CD8-positive, alpha-beta T cell (primary cell): ENCODE measurements at regions of chr2 and their contacts with region 1.

Region 1: GRCh38 chr2:203586696-203587095 is 51.6 kb upstream of the RAPH1 start:
- DNase-seq: no peak
- ATAC-seq: no peak
- H3K4me3 ChIP-seq: no peak overlapping the region
- H3K4me3 Mint-ChIP-seq: no peak overlapping the region
- H3K27ac ChIP-seq: no peak overlapping the region
- H3K27ac Mint-ChIP-seq: no peak overlapping the region
- H3K4me1 ChIP-seq: no peaks in the 10 kb centered on the region
- H3K4me1 Mint-ChIP-seq: peaks cover 5% of the 10 kb centered on the region
- H3K27me3 ChIP-seq: peaks cover 0 to 2% of the 10 kb centered on the region in 2 experiments
- H3K27me3 Mint-ChIP-seq: no peaks in the 10 kb centered on the region
- CTCF ChIP-seq: no peak

Region 2: GRCh38 chr2:203551778-203552177 is 34.9 kb before region 1 on chr2:
- CTCF ChIA-PET with region 1: no interaction called
- POLR2A ChIA-PET with region 1: no interaction called
- intact Hi-C with region 1: loop called in 1 of 2 experiments (anchors 2 kb)
- DNase-seq: no peak
- ATAC-seq: no peak
- H3K4me3 ChIP-seq: no peak overlapping the region
- H3K4me3 Mint-ChIP-seq: no peak overlapping the region
- H3K27ac ChIP-seq: no peak overlapping the region
- H3K27ac Mint-ChIP-seq: no peak overlapping the region
- H3K4me1 ChIP-seq: peaks cover 4% of the 10 kb centered on the region
- H3K4me1 Mint-ChIP-seq: peaks cover 11% of the 10 kb centered on the region
- H3K27me3 ChIP-seq: no peaks in the 10 kb centered on the region
- H3K27me3 Mint-ChIP-seq: peaks cover 2% of the 10 kb centered on the region
- CTCF ChIP-seq: no peak

Region 3: GRCh38 chr2:203706403-203706802 is 119.7 kb after region 1 on chr2 and contains the start of gene CD28:
- CTCF ChIA-PET with region 1: no interaction called
- POLR2A ChIA-PET with region 1: no interaction called
- intact Hi-C with region 1: no loop called
- DNase-seq: peak; percentile 79 to 97 (median 89)
- ATAC-seq: peak; percentile 81
- H3K4me3 ChIP-seq: peak within 1 kb of the TSS; percentile 63 to 64
- H3K4me3 Mint-ChIP-seq: peak within 1 kb of the TSS; percentile 93
- H3K27ac ChIP-seq: peak within 1 kb of the TSS; percentile 82 to 83
- H3K27ac Mint-ChIP-seq: peak within 1 kb of the TSS; percentile 97
- H3K4me1 ChIP-seq: peaks cover 45% of the 10 kb centered on the region
- H3K4me1 Mint-ChIP-seq: peaks cover 53% of the 10 kb centered on the region
- H3K27me3 ChIP-seq: peaks cover 0 to 2% of the 10 kb centered on the region in 2 experiments
- H3K27me3 Mint-ChIP-seq: no peaks in the 10 kb centered on the region
- CTCF ChIP-seq: no peak
- total RNA-seq, gene CD28: 78.4 to 80.7 TPM